GM12878 (cell line): ENCODE measurements at regions of chr10 and their contacts with region 1.

Region 1: GRCh38 chr10:106795619-106796018 is 368.9 kb downstream of the SORCS1 start:
- DNase-seq: peak; percentile 48
- ATAC-seq: peak; percentile 98
- H3K4me3 ChIP-seq: no peak overlapping the region
- H3K27ac ChIP-seq: no peak overlapping the region
- H3K4me1 ChIP-seq: no peaks in the 10 kb centered on the region
- H3K27me3 ChIP-seq: no peaks in the 10 kb centered on the region
- CTCF ChIP-seq: peak; percentile 57 to 78 (median 71)
- EP300 ChIP-seq: no peak
- POLR2A ChIP-seq: no peak
- RAD21 ChIP-seq: peak; percentile 88

Region 2: GRCh38 chr10:106866244-106866845 is 70.7 kb after region 1 on chr10:
- CTCF ChIA-PET with region 1: interaction called, 16 read pairs
- POLR2A ChIA-PET with region 1: no interaction called
- RAD21 ChIA-PET with region 1: interaction called, 3 read pairs
- SMC1A ChIA-PET with region 1: interaction called, 6 read pairs
- in situ Hi-C with region 1: no loop called
- intact Hi-C with region 1: no loop called
- DNase-seq: peak; percentile 58
- ATAC-seq: peak; percentile 68
- H3K4me3 ChIP-seq: no peak overlapping the region
- H3K27ac ChIP-seq: 0 out of 2 replicates have a peak overlapping the region, but pooled peaks have one; percentile 15
- H3K4me1 ChIP-seq: peaks cover 6% of the 10 kb centered on the region; the same call in 1 of the 2 replicates
- H3K27me3 ChIP-seq: no peaks in the 10 kb centered on the region
- CTCF ChIP-seq: peak; percentile 11 to 24 (median 15); a peak in 1 of 6 replicates
- EP300 ChIP-seq: no peak
- POLR2A ChIP-seq: no peak
- RAD21 ChIP-seq: peak; percentile 47

Region 3: GRCh38 chr10:106980495-106981451 is 185.2 kb after region 1 on chr10:
- CTCF ChIA-PET with region 1: interaction called, 59 read pairs
- POLR2A ChIA-PET with region 1: interaction called, 3 read pairs
- RAD21 ChIA-PET with region 1: interaction called, 30 read pairs
- SMC1A ChIA-PET with region 1: interaction called, 32 read pairs
- in situ Hi-C with region 1: no loop called
- intact Hi-C with region 1: loop called (anchors 1 kb)
- DNase-seq: peak; percentile 33
- ATAC-seq: peak; percentile 82
- H3K4me3 ChIP-seq: no peak overlapping the region
- H3K27ac ChIP-seq: no peak overlapping the region
- H3K4me1 ChIP-seq: 0 out of 2 replicates have a peak, but pooled peaks cover 3% of the 10 kb centered on the region
- H3K27me3 ChIP-seq: no peaks in the 10 kb centered on the region
- CTCF ChIP-seq: peak; percentile 26 to 67 (median 33); a peak in 4 of 6 replicates
- EP300 ChIP-seq: no peak
- POLR2A ChIP-seq: no peak
- RAD21 ChIP-seq: peak; percentile 92

Region 4: DNA sequence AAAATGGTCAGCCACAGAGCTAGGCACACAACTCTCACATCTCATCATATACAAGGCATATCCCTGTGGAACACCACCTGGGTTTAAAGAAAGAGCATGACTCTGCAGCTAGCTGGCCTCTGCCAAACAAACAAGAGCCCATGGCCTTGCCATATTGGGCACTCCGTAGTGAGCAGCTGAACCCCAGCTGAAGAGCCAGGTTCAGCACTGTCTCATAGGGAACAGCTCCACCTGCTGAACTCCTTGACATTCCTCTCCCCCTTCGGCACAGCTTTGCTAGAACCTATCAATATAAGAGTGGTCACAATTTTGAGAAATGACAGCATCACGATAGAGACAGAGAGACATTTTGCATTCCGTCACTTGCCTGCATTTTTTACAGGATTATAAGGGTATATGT is 348.9 kb after region 1 on chr10:
- CTCF ChIA-PET with region 1: interaction called, 9 read pairs
- POLR2A ChIA-PET with region 1: no interaction called
- RAD21 ChIA-PET with region 1: no interaction called
- SMC1A ChIA-PET with region 1: no interaction called
- in situ Hi-C with region 1: no loop called
- intact Hi-C with region 1: loop called (anchors 1 kb)
- DNase-seq: no peak
- ATAC-seq: peak; percentile 51; the same call in 2 of the 3 replicates
- H3K4me3 ChIP-seq: no peak overlapping the region
- H3K27ac ChIP-seq: no peak overlapping the region
- H3K4me1 ChIP-seq: no peaks in the 10 kb centered on the region
- H3K27me3 ChIP-seq: no peaks in the 10 kb centered on the region
- CTCF ChIP-seq: no peak; a peak in 1 of 6 replicates
- EP300 ChIP-seq: no peak
- POLR2A ChIP-seq: no peak
- RAD21 ChIP-seq: no peak